Prostate gland (tissue), 2 donors: ENCODE measurements at regions of chr17 and their contacts with region 1.

Region 1: GRCh38 chr17:14926526-14927122 is 338.5 kb downstream of the PMP22 start:
- DNase-seq: peak; percentile 62
- H3K4me3 ChIP-seq: no peak overlapping the region
- H3K27ac ChIP-seq: no peak overlapping the region
- H3K4me1 ChIP-seq: no peaks in the 10 kb centered on the region
- H3K27me3 ChIP-seq: no peaks in the 10 kb centered on the region
- CTCF ChIP-seq: peak; percentile 68 to 78 (median 78)
- POLR2A ChIP-seq: no peak

Region 2: GRCh38 chr17:13031718-13032350 is 1894.8 kb before region 1 on chr17:
- intact Hi-C with region 1: loop called (anchors 10 kb)
- DNase-seq: no peak
- H3K4me3 ChIP-seq: no peak overlapping the region
- H3K27ac ChIP-seq: no peak overlapping the region
- H3K4me1 ChIP-seq: no peaks in the 10 kb centered on the region
- H3K27me3 ChIP-seq: no peaks in the 10 kb centered on the region
- CTCF ChIP-seq: peak; percentile 35 to 60 (median 48)
- POLR2A ChIP-seq: no peak

Region 3: DNA sequence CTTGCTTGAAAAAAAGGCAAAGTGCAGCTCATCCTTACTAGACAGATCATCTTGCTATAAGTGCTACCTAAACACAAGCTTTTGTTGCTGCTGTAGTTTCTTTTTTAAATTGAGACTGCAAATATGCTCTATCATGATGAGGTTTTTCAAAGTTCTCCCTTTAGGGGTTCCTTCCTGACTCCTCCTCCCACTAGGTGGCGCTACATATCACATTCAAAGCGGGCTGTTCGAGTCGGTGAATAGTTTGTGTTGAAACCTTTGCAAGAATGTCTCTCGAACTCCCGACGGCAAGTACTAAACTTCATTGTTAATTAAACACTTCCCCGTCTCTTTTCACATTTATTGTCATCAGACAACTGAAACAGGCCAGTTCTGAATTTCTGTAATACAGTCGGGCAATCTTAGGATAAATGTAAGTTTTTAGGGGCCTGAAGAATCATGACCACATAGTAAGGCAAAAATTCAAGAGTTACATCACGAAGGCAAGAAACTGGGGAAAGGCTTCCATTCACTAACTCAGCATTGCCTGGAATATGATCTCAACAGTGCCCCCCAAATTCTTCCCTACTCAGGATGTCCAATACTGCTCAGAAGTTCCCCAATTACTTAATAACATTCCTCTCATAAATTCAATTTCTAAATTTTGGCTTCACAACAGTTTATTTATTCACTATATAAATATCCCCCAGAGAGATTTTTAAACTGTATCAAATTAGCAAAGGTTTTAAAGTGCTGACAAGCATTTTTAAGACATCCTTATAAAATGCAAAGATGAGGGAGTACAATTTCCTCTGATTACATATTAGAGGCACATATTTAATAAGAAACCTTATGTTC is 1331.6 kb before region 1 on chr17:
- intact Hi-C with region 1: loop called (anchors 5 kb)
- DNase-seq: peak; percentile 75
- H3K4me3 ChIP-seq: no peak overlapping the region
- H3K27ac ChIP-seq: no peak overlapping the region
- H3K4me1 ChIP-seq: no peaks in the 10 kb centered on the region
- H3K27me3 ChIP-seq: no peaks in the 10 kb centered on the region
- CTCF ChIP-seq: peak; percentile 66 to 86 (median 72)
- POLR2A ChIP-seq: no peak

Region 4: GRCh38 chr17:14316150-14316785 is 610.4 kb before region 1 on chr17:
- intact Hi-C with region 1: loop called (anchors 10 kb)
- DNase-seq: no peak
- H3K4me3 ChIP-seq: no peak overlapping the region
- H3K27ac ChIP-seq: no peak overlapping the region
- H3K4me1 ChIP-seq: no peaks in the 10 kb centered on the region
- H3K27me3 ChIP-seq: no peaks in the 10 kb centered on the region
- CTCF ChIP-seq: no peak
- POLR2A ChIP-seq: no peak

Region 5: DNA sequence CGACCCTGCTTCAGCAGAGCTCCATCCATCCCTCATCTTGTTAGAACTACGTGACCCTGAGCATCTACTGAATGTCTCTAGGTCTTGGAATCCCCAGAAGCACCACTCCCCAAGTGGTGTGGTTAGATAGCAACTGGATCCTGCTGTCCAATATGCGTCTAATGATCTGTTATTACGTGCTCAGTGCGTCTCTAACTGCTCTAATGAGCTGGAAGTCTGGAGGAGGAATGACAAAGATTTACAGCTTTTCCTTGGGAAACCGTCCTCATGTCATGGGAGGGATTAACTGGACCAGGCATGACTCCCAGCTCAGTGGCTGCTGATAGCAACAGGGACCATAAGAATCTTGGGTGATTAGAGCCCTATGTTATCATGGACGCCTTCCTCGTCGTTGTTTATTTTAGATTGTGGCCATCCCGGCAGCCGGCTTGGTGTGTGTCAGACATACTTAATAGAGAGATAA is 474.9 kb before region 1 on chr17:
- intact Hi-C with region 1: no loop called
- DNase-seq: no peak
- H3K4me3 ChIP-seq: no peak overlapping the region
- H3K27ac ChIP-seq: no peak overlapping the region
- H3K4me1 ChIP-seq: no peaks in the 10 kb centered on the region
- H3K27me3 ChIP-seq: no peaks in the 10 kb centered on the region
- CTCF ChIP-seq: no peak
- POLR2A ChIP-seq: no peak

Region 6: DNA sequence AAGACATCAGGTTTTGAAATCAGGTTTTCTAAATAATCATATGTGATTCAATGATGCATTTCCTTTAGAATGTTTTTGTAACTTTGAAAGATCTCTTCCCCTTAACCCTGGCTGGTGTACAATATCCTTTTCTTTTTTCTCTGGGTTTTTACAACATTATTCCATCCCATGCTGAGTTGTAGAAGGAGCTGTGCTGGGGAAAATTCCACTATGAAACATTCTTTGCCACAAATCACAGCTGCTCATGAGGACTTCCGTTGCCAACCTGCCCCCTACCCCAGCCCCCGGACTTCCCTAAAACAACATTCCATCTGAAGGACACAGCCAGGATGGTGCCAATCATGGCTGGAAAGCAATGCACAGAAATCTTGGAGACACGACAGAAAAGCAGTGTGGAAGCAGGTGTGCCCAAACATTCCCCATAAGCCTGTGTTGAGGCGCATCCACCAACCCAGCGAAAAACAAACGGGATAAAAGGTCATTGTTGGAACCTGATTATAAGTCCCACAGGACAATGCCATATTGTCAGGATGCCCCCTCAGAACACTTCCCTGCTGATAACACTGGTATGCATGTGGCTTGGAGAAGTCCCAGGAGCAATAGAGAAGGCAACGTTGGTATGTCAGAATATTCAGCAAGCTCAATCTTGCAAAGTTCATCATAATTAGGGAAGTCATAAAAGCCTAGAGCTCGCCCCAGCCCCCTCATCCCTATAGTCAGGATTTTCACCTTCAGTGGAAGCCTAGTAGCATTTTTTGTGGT is 150.7 kb before region 1 on chr17:
- intact Hi-C with region 1: no loop called
- DNase-seq: no peak
- H3K4me3 ChIP-seq: no peak overlapping the region
- H3K27ac ChIP-seq: no peak overlapping the region
- H3K4me1 ChIP-seq: no peaks in the 10 kb centered on the region
- H3K27me3 ChIP-seq: no peaks in the 10 kb centered on the region
- CTCF ChIP-seq: no peak
- POLR2A ChIP-seq: no peak

Region 7: GRCh38 chr17:15038656-15039055 is 112.0 kb after region 1 on chr17:
- intact Hi-C with region 1: no loop called
- DNase-seq: no peak
- H3K4me3 ChIP-seq: no peak overlapping the region
- H3K27ac ChIP-seq: no peak overlapping the region
- H3K4me1 ChIP-seq: no peaks in the 10 kb centered on the region
- H3K27me3 ChIP-seq: no peaks in the 10 kb centered on the region
- CTCF ChIP-seq: no peak
- POLR2A ChIP-seq: no peak